ENCODE measurements at regions of chr1 and their contacts with region 1.

Region 1: DNA sequence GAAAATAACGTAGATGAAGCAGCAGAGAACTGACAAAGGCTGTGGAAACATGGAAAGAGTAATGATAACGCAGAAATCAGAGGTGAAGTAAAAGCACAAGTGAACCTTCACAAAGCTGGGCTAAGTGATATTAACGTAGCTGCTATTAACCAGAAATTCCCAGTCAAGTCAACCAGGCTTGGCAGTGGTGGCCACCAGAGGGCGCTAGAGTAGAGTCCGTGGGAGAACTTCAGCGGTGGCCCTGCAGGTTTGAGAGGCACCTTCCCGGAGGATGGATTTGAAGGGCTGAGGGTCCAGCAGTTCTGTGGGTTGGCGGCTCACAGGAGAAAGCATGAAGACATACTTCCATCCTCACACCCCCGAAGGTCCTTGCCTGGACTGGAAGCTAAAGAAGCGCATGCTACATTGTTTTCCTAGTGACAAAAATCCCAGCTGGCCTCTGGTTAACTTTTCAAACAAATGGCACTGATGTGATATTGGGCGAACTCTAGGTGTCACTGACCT is 81.7 kb upstream of the ZNF648 start:
- DNase-seq: peak; percentile 82 to 90
- ATAC-seq: peak; percentile 72 to 93 (median 83)
- H3K4me3 ChIP-seq: no peak overlapping the region
- H3K4me3 Mint-ChIP-seq: no peak overlapping the region
- H3K27ac ChIP-seq: no peak overlapping the region
- H3K27ac Mint-ChIP-seq: no peak overlapping the region
- H3K4me1 ChIP-seq: peaks cover 10% of the 10 kb centered on the region
- H3K4me1 Mint-ChIP-seq: peaks cover 0 to 6% of the 10 kb centered on the region in 2 donors
- H3K27me3 ChIP-seq: no peaks in the 10 kb centered on the region
- H3K27me3 Mint-ChIP-seq: peaks cover 10 to 18% of the 10 kb centered on the region in 2 donors
- CTCF ChIP-seq: peak; percentile 89

Region 2: GRCh38 chr1:182129398-182129797 is 13.8 kb before region 1 on chr1:
- intact Hi-C with region 1: no loop called
- DNase-seq: no peak
- ATAC-seq: no peak
- H3K4me3 ChIP-seq: no peak overlapping the region
- H3K4me3 Mint-ChIP-seq: no peak overlapping the region
- H3K27ac ChIP-seq: no peak overlapping the region
- H3K27ac Mint-ChIP-seq: no peak overlapping the region
- H3K4me1 ChIP-seq: no peaks in the 10 kb centered on the region
- H3K4me1 Mint-ChIP-seq: no peaks in the 10 kb centered on the region
- H3K27me3 ChIP-seq: no peaks in the 10 kb centered on the region
- H3K27me3 Mint-ChIP-seq: peaks cover 6 to 24% of the 10 kb centered on the region in 2 donors
- CTCF ChIP-seq: no peak

Region 3: DNA sequence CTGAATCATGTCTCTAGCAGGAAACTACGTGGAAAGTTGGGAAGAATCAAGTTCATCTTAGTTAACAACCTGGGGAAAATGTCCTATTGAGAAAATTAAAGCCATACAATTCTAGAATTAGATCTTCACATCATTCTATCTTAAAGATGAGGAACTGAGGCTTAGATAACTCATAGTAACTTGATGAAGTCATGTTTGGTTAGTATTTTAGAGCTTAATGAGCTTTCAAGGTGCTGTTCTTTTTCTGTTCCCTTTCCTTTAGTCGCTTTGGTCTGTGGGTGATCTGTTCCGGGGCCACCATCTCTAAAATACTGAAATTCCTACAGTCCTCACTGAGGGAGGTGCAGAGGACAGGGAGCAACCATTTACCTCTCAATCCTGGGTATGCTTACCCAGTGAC is 252.7 kb after region 1 on chr1:
- intact Hi-C with region 1: loop called (anchors 1 kb)
- DNase-seq: no peak
- ATAC-seq: no peak
- H3K4me3 ChIP-seq: no peak overlapping the region
- H3K4me3 Mint-ChIP-seq: no peak overlapping the region
- H3K27ac ChIP-seq: no peak overlapping the region
- H3K27ac Mint-ChIP-seq: no peak overlapping the region
- H3K4me1 ChIP-seq: peaks cover 9% of the 10 kb centered on the region
- H3K4me1 Mint-ChIP-seq: peaks cover 17 to 21% of the 10 kb centered on the region in 2 donors
- H3K27me3 ChIP-seq: no peaks in the 10 kb centered on the region
- H3K27me3 Mint-ChIP-seq: peaks cover 0 to 3% of the 10 kb centered on the region in 2 donors
- CTCF ChIP-seq: no peak

Measured in natural killer cell (primary cell).